AG04449 (cell line): ENCODE measurements at regions of chr5 and their contacts with region 1.

Region 1: DNA sequence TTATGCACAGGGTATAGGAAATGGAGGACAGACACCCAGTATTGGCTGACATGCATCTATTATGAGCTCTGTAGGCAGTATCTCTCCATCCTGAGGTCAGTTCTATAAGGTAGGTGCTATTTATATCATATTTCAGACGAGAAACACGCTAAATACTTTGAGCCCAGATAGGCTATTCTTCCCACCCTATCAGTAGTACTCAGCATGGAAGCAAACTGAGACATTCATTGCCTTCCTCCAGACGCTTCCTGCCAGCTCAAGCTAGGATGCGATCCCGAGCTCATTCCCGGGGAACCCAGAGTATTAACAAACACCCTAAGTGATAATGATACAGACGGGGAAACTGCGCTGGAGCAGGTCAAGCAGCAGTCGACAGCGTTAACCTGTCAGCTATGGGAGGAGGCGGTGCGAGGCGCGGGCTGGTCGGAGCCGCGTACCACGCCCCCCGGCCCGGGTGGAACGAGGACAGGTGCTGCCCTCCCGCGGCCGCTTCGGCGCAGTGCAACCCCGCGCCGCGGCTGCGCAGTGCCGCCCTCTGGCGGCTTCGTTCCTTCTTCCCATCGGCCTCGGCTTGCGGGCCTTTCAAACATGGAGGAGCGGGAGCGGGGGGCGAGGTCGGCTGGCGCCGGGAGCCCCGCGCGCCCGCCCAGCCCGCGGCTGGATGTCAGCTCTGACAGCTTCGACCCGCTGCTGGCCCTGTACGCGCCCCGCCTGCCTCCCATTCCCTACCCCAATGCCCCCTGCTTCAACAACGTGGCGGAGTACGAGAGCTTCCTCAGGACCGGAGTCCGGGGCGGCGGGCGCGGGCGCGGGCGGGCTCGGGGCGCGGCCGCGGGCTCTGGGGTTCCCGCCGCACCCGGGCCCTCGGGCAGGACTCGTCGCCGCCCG is at the start of gene LSM11:
- DNase-seq: no peak
- H3K4me3 ChIP-seq: peak within 1 kb of the TSS; percentile 80
- CTCF ChIP-seq: peak; percentile 100

Region 2: DNA sequence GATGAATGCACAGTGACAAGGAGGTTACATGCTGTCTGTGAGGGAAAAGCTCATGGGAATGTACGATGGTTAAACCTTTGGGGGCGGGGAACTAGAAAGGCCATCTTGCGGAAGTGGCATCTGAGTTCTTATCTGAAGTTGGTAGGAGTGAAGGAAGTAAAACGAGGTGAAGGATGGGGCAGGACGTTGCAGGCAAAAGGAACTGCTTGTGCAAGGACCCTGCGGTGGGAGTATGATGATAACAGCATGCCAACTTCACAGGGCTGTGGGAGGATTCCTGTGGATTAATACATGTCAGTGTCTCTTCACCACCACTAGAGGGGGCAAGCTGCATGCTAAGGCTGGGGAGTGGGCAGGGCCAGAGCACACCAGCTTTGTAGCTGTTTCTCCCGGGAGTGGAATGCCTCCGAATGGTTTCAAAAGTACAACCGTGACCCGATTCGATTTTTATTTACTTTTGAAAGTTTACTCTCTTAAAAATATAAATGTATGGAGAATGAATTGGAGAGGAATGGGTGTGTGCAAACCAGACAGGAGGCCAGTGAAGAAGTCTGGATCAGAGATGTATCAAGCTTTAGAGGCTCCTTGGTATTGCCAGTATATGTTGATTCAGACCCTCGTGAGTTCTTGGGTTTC is 415.0 kb before region 1 on chr5:
- CTCF ChIA-PET with region 1: interaction called, 205 read pairs
- POLR2A ChIA-PET with region 1: no interaction called
- DNase-seq: peak; percentile 38
- H3K4me3 ChIP-seq: peak overlapping the region; percentile 35
- CTCF ChIP-seq: peak; percentile 93

Region 3: GRCh38 chr5:157354800-157355199 is 388.6 kb before region 1 on chr5:
- CTCF ChIA-PET with region 1: interaction called, 24 read pairs
- POLR2A ChIA-PET with region 1: no interaction called
- DNase-seq: no peak
- H3K4me3 ChIP-seq: no peak overlapping the region
- CTCF ChIP-seq: peak; percentile 34

Region 4: DNA sequence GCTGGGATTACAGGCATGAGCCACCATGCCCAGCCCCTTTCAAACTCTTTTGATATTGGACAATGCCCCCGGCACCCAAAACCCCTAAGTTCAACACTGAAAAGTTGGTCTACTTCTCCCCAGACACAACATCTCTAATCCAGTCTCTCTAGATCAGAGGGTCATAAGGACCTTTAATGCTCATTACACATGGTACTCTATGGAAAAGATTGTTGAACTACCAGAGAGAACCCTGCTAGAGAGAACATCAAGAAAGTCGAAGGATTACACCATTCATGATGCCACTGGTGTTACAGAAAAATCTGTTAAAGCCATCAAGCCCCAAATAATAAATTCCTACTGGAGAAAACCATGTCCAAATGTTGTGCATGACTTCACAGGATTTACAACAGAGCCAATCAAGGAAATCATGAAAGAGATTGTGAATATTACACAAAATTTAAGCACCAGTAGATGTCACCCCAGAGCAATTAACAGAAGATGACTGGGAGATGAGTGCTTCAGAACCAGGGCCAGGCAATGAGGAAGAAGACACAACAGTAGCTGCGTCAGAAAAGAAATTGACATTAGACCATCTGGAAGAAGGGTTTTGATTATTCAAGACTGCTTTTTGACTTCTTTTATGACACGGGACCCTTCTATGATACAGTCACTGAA is 311.7 kb before region 1 on chr5:
- CTCF ChIA-PET with region 1: interaction called, 36 read pairs
- POLR2A ChIA-PET with region 1: no interaction called
- DNase-seq: peak; percentile 16
- H3K4me3 ChIP-seq: no peak overlapping the region
- CTCF ChIP-seq: peak; percentile 34

Region 5: DNA sequence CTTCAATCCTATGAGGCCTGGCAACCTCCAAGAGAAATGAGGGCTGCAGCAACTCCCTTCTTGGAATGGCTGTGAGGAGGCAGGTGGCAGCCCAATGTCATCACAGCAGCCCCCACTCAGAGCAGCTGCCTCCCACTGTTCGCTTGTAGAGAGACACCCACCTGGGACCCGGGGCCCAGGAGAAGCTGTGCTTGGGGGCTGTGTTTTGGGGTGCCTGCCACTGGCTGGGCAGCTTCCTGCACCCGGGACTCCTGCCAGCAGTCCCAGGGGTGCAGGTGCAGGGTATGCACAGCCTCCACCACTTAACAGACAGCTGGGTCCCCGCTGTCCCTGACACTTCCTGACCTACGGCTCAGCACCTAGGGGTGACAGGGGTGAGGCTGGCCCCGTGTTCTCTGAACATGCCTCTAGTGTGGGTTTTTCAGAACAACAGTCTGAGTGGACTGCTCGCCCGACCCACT is 257.2 kb before region 1 on chr5:
- CTCF ChIA-PET with region 1: interaction called, 17 read pairs
- POLR2A ChIA-PET with region 1: no interaction called
- DNase-seq: no peak
- H3K4me3 ChIP-seq: no peak overlapping the region
- CTCF ChIP-seq: no peak

Region 6: DNA sequence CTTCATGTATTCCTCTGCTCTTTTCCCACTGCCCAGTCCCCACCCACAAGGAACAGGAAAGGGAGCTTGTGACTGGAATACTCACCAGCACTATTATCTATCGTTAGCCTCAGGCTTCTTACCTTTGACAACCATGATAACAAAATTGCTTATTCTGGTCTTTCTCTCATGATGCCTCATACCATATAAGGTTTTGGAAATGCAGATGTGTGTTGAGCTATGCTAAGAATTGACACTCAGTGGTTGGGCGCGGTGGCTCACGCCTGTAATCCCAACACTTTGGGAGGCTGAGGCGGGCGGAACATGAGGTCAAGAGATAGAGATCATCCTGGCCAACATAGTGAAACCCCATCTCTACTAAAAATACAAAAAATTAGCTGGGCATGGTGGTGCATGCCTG is 116.6 kb before region 1 on chr5:
- CTCF ChIA-PET with region 1: no interaction called
- POLR2A ChIA-PET with region 1: no interaction called
- DNase-seq: no peak
- H3K4me3 ChIP-seq: no peak overlapping the region
- CTCF ChIP-seq: no peak

Region 7: DNA sequence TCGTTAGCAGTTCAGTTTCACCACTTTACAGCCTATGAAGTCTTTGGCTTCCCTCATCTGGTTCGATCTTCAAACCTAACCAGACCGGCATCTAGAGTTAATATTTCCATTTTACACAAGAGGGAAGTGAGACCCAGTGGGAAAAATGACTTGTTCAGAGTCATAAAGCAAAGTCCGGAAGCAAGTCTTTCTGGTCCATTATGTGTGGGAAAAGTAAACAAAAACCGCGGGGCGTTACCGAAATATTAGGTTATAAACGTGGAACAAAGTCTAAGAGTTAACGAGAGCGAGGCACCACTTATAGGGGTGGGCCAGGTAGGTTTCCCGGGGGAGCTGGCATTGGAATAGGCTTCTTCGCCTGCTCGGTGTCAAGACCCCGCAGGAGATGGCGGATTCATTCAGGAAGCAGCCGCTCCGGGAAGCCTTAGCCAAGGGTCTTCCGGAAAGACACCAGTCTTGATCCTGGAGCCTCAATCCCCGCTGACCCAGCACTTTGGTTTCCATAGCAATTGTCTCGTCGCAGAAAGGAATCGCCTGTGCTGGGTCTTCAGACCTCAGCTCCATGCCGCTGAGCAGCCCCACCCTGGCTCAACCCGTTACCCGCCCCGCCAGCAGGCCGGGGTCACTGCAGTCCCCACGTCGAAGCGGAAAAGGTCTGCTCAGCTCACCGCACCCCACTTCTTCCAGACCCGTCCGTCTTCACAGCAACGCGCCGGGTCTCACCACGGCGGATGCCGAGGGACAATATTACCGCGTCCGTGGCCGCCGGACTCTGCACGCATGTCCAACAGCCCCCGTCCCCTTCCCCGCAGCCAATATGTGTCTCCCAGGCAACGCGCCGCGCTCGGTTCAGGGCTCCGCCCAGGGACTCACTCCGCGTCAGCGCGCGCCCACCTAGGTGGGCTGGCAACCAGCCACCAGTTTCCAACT is 72.5 kb before region 1 on chr5 and contains the start of gene C5orf52:
- CTCF ChIA-PET with region 1: interaction called, 74 read pairs
- POLR2A ChIA-PET with region 1: no interaction called
- DNase-seq: no peak
- H3K4me3 ChIP-seq: peak within 1 kb of the TSS; percentile 71
- CTCF ChIP-seq: no peak

Region 8: GRCh38 chr5:157731272-157732129 is 11.9 kb before region 1 on chr5 and contains the start of gene THG1L:
- CTCF ChIA-PET with region 1: interaction called, 113 read pairs
- POLR2A ChIA-PET with region 1: interaction called, 6 read pairs
- DNase-seq: peak; percentile 81
- H3K4me3 ChIP-seq: peak within 1 kb of the TSS; percentile 94
- CTCF ChIP-seq: no peak

Region 9: GRCh38 chr5:158224253-158224652 is 480.8 kb after region 1 on chr5:
- CTCF ChIA-PET with region 1: no interaction called
- POLR2A ChIA-PET with region 1: no interaction called
- DNase-seq: no peak
- H3K4me3 ChIP-seq: no peak overlapping the region
- CTCF ChIP-seq: no peak